ENCODE measurements at regions of chr10 and their contacts with region 1.

Region 1: DNA sequence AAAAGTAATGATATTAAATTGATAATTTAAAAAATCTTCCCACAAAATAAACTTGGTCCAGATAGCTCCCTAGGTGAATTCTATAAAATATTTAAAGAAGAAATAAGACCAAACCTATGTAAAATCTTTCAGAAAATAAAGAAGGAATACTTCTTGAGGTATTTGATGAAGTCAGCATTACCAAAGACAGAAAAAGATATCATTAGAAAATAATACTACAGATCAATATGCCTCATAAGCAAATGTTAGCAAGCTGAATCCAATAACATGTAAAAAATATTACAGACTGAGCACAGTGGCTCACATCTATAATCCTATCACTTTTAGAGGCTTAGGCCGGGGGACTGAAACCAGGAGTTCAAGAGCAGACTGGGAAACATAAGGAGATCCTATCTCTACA is 30.0 kb downstream of the TMEM26 start:
- DNase-seq: no peak
- H3K4me3 ChIP-seq: no peak overlapping the region
- H3K27ac ChIP-seq: no peak overlapping the region
- H3K4me1 ChIP-seq: no peaks in the 10 kb centered on the region
- H3K27me3 ChIP-seq: no peaks in the 10 kb centered on the region
- CTCF ChIP-seq: no peak

Region 2: DNA sequence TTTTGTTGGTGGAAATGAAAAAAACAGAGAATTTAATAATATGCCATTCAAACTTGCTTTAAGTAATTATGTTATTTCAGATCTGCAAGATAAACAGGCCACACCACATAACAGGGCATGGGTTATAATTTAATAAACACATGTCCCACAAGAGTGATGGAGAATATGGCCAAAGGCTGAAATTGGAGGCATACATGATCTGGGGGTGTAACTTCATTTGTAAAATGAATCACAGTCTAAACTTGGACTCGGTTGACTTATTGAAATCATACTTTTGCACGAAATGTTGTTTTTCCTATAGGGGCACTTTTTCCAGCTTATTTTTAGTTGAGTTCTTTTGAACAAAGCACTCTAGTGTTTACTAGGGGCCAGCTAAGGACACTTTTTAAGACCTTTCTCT is 121.6 kb before region 1 on chr10:
- CTCF ChIA-PET with region 1: no interaction called
- POLR2A ChIA-PET with region 1: no interaction called
- intact Hi-C with region 1: no loop called
- DNase-seq: no peak
- H3K4me3 ChIP-seq: no peak overlapping the region
- H3K27ac ChIP-seq: no peak overlapping the region
- H3K4me1 ChIP-seq: no peaks in the 10 kb centered on the region
- H3K27me3 ChIP-seq: no peaks in the 10 kb centered on the region
- CTCF ChIP-seq: no peak

Region 3: GRCh38 chr10:61606951-61607907 is 184.1 kb after region 1 on chr10:
- CTCF ChIA-PET with region 1: no interaction called
- POLR2A ChIA-PET with region 1: interaction called, 10 read pairs
- intact Hi-C with region 1: no loop called
- DNase-seq: peak; percentile 38
- H3K4me3 ChIP-seq: no peak overlapping the region
- H3K27ac ChIP-seq: no peak overlapping the region
- H3K4me1 ChIP-seq: peaks cover 2% of the 10 kb centered on the region
- H3K27me3 ChIP-seq: no peaks in the 10 kb centered on the region
- CTCF ChIP-seq: peak; percentile 66